ENCODE measurements at regions of chr2 and their contacts with region 1.

Region 1: DNA sequence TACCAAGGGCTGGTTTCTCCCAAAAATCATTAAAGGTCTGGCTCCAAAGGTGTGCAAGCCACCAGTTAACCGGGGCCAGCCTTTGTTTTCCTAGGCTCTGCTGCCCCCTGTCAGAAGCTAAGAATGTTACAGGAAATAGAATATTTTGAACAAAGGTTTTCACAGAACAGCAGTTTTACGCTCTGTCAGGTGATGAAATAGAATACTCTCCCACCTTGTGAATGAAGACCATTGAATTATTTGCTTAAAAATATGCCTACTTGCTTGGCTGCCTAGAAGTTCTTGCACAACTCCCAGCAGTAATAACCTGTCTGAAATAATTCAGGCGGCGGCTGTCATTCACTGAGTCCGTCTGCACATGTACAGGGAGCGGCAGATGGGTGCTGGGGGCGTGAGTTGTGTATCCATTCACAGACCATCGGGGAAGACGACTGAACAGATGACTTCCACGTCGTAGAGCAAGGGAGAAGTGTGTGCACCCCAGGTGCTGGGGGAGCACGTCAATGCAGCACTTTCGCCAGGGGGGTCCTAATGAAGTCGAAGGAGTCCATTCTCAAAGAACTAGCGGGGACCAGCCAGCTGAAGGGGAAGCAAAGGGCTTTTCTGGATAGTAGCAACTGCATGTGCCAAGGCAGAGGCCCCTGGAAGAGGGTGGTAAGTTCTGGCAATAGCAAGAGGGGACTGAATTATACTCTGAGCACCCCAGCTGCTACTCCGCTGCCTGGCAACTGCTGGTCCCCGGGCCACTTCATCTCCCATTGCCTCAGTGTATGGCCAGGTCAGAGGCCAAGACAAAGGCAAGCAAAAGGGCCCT is 56.1 kb downstream of the SF3B1 start:
- DNase-seq: peak; percentile 69
- H3K4me3 ChIP-seq: peak overlapping the region; percentile 26
- H3K27ac ChIP-seq: no peak overlapping the region
- H3K4me1 ChIP-seq: peaks cover 4% of the 10 kb centered on the region
- H3K27me3 ChIP-seq: no peaks in the 10 kb centered on the region
- CTCF ChIP-seq: peak; percentile 86

Region 2: GRCh38 chr2:196354186-196354585 is 1024.5 kb before region 1 on chr2:
- CTCF ChIA-PET with region 1: no interaction called
- POLR2A ChIA-PET with region 1: no interaction called
- intact Hi-C with region 1: no loop called
- DNase-seq: no peak
- H3K4me3 ChIP-seq: no peak overlapping the region
- H3K27ac ChIP-seq: no peak overlapping the region
- H3K4me1 ChIP-seq: no peaks in the 10 kb centered on the region
- H3K27me3 ChIP-seq: no peaks in the 10 kb centered on the region
- CTCF ChIP-seq: no peak

Region 3: DNA sequence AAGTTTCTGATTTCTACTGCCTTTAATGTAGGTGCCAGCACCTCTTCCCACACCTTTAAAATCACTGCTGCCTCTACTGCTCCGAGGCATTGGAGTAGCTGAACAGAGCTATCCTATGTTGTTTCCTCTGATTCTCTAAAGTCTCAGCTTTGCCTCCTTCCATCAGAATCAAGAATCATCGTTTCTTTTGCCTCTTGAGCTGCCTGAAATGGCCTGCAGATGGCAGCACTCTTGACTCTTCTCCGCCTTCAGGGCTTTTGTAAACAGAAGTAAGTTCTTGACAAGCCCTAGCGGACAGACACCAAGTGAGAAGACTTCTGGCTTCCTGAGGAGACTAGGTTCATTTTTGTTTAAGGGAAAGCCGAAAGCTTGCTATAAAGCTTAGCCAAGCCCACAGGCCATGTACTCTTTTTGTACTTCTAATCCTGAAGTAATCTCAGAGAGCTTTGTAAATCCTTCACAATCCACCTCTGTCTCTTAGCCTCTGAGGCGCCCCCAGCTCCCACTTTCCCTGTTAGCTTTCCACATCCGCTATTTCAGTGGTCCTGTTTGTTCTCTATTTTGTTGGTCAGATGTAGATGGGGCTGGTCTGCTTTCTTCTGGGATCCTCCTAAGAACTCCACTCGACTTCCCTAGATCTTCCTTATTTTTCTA is 627.6 kb before region 1 on chr2:
- CTCF ChIA-PET with region 1: no interaction called
- POLR2A ChIA-PET with region 1: no interaction called
- intact Hi-C with region 1: loop called (anchors 2 kb)
- DNase-seq: peak; percentile 87
- H3K4me3 ChIP-seq: no peak overlapping the region
- H3K27ac ChIP-seq: no peak overlapping the region
- H3K4me1 ChIP-seq: peaks cover 10% of the 10 kb centered on the region
- H3K27me3 ChIP-seq: no peaks in the 10 kb centered on the region
- CTCF ChIP-seq: peak; percentile 97

Region 4: DNA sequence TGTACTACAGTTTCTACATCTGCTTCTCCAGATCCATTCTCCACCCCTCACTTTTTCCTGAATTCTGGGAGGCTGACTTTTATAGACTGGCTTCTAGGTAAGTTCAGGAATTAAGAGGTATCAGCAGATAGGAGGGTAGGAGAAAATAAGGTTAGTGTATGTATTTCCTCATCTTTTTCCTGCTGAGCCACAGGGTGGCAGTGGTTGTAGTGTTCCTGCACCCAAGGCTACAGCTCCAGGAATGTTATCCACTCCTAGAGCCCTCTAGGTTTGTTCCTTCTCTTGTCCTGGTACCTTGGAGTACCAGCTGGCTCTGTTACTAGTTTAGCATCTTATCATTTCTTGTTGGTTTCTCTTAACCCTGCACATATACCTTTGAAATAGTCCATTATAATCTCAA is 528.8 kb before region 1 on chr2:
- CTCF ChIA-PET with region 1: interaction called, 4 read pairs
- POLR2A ChIA-PET with region 1: no interaction called
- intact Hi-C with region 1: loop called (anchors 5 kb)
- DNase-seq: peak; percentile 54
- H3K4me3 ChIP-seq: no peak overlapping the region
- H3K27ac ChIP-seq: no peak overlapping the region
- H3K4me1 ChIP-seq: peaks cover 19% of the 10 kb centered on the region
- H3K27me3 ChIP-seq: no peaks in the 10 kb centered on the region
- CTCF ChIP-seq: peak; percentile 60

Region 5: GRCh38 chr2:197011799-197012641 is 366.7 kb before region 1 on chr2:
- CTCF ChIA-PET with region 1: interaction called, 3 read pairs
- POLR2A ChIA-PET with region 1: no interaction called
- intact Hi-C with region 1: loop called (anchors 1 kb)
- DNase-seq: peak; percentile 83
- H3K4me3 ChIP-seq: no peak overlapping the region
- H3K27ac ChIP-seq: no peak overlapping the region
- H3K4me1 ChIP-seq: peaks cover 43% of the 10 kb centered on the region
- H3K27me3 ChIP-seq: no peaks in the 10 kb centered on the region
- CTCF ChIP-seq: peak; percentile 95

Region 6: DNA sequence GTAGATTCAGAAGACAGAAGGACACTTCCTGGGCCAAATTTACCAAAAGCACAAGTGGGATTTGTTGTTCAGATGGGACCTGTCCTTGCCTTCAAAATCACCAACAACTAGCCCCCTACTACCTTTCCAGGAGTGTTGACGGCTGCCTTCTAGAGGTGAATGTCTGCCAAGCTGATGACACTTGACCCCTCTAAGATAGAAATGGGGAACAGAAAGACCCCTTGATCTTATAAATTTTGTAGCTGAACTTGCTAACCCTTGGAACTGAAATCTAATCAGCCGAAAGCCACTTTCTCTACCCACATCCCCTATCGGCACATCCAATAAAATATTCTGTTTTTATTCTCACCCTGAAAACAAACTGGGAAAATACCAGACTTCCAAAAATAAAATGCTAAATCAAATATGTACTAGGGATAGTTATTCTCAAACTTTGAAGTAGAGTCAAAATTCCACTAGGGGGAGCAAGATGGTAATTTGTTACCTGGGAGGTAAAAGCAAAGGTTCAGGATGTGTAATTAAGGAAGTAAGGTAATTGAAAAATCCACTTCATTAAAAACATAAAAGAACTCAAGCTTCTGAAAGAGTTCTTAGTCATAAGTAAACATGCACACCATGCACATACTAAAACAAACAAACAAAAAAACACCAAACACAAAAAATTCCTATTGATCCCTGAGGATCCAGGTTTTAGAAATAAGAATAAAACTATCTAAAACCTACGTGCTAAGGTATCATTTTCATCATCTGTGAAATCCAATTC is 187.3 kb before region 1 on chr2:
- CTCF ChIA-PET with region 1: interaction called, 3 read pairs
- POLR2A ChIA-PET with region 1: no interaction called
- intact Hi-C with region 1: loop called (anchors 2 kb)
- DNase-seq: peak; percentile 50
- H3K4me3 ChIP-seq: no peak overlapping the region
- H3K27ac ChIP-seq: no peak overlapping the region
- H3K4me1 ChIP-seq: peaks cover 9% of the 10 kb centered on the region
- H3K27me3 ChIP-seq: no peaks in the 10 kb centered on the region
- CTCF ChIP-seq: peak; percentile 82

Measured in A673 (cell line).